ENCODE measurements at regions of chr7 and their contacts with region 1.

Region 1: GRCh38 chr7:129644634-129645230 is 33.2 kb downstream of the NRF1 start:
- DNase-seq: peak; percentile 22
- H3K4me3 Mint-ChIP-seq: no peak overlapping the region
- H3K27ac Mint-ChIP-seq: no peak overlapping the region
- H3K4me1 Mint-ChIP-seq: peaks cover 33% of the 10 kb centered on the region
- H3K27me3 Mint-ChIP-seq: no peaks in the 10 kb centered on the region
- CTCF ChIP-seq: peak; percentile 31

Region 2: DNA sequence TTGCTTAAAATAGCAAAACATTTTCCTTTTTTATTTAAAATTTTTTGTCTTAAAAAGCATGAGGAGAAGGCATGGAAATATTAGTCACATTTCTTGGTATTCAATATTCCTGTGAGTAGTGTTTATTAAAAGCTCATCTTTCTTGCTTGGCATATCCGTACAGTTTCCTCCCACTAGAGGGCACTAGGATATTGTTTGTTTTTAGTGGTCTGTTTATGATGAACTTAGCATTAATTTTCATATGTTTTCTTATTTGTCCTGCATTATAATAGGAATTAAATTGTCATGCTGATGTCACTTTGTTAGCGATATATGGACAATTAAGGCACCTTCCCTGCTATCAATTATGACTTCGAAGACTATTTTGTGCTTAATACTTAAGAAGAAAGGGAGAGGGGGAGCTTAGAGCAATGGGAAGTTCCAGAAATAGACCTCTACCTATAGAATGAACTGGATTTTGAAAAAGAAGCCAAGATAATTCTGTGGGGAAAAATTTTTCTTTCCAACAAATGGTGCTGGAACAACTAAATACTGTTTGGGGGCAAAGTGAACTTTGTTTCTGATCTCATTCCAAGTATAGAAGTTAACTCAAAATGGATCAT is 301.5 kb before region 1 on chr7:
- CTCF ChIA-PET with region 1: no interaction called
- intact Hi-C with region 1: no loop called
- DNase-seq: peak; percentile 38
- H3K4me3 Mint-ChIP-seq: no peak overlapping the region
- H3K27ac Mint-ChIP-seq: no peak overlapping the region
- H3K4me1 Mint-ChIP-seq: no peaks in the 10 kb centered on the region
- H3K27me3 Mint-ChIP-seq: no peaks in the 10 kb centered on the region
- CTCF ChIP-seq: peak; percentile 49

Region 3: DNA sequence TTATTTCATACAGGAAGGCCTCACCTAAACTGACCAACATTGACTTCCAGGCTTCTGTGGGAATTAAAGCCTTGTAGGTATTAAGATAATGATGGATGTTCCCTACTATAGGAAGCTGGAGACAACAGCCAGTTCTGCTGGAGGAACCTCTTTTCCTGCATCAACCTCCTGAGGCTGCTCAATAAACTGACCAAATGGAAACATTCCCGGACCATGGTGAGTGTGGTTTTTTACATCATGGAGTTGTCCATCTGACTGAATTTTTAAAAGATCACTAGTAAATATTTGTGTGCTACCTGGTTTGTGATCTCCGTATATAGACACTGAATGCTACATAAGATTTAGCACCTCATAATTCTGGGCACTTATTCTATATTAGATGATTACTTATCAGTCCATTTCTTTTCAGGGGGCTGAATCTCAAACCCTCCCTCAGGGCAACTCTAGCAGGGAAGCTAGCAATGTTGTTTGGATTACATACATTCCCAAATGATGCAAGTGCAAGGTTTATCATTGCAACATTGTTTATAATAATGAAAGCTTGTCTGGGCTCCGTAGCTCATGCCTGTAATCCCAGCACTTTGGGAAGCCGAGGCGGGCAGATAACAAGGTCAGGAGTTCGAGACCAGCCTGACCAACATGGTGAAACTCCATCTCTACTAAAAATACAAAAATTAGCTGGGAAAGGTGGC is 163.9 kb before region 1 on chr7:
- CTCF ChIA-PET with region 1: no interaction called
- intact Hi-C with region 1: loop called (anchors 5 kb)
- DNase-seq: no peak
- H3K4me3 Mint-ChIP-seq: no peak overlapping the region
- H3K27ac Mint-ChIP-seq: no peak overlapping the region
- H3K4me1 Mint-ChIP-seq: no peaks in the 10 kb centered on the region
- H3K27me3 Mint-ChIP-seq: no peaks in the 10 kb centered on the region
- CTCF ChIP-seq: no peak

Region 4: GRCh38 chr7:129804890-129805719 is 160.4 kb after region 1 on chr7:
- CTCF ChIA-PET with region 1: no interaction called
- intact Hi-C with region 1: no loop called
- DNase-seq: no peak
- H3K4me3 Mint-ChIP-seq: no peak overlapping the region
- H3K27ac Mint-ChIP-seq: no peak overlapping the region
- H3K4me1 Mint-ChIP-seq: no peaks in the 10 kb centered on the region
- H3K27me3 Mint-ChIP-seq: peaks cover 12% of the 10 kb centered on the region
- CTCF ChIP-seq: no peak

Region 5: GRCh38 chr7:129933627-129934026 is 288.9 kb after region 1 on chr7:
- CTCF ChIA-PET with region 1: no interaction called
- intact Hi-C with region 1: no loop called
- DNase-seq: no peak
- H3K4me3 Mint-ChIP-seq: no peak overlapping the region
- H3K27ac Mint-ChIP-seq: no peak overlapping the region
- H3K4me1 Mint-ChIP-seq: no peaks in the 10 kb centered on the region
- H3K27me3 Mint-ChIP-seq: no peaks in the 10 kb centered on the region
- CTCF ChIP-seq: no peak

Measured in Calu3 (cell line).